ENCODE measurements at regions of chr19 and their contacts with region 1.

Region 1: GRCh38 chr19:37906869-37907734 is at the start of gene SIPA1L3:
- DNase-seq: peak; percentile 88 to 97
- H3K4me3 ChIP-seq: peak within 1 kb of the TSS; percentile 100
- H3K27ac ChIP-seq: peak within 1 kb of the TSS; percentile 67
- H3K4me1 ChIP-seq: peaks cover 18% of the 10 kb centered on the region
- H3K27me3 ChIP-seq: no peaks in the 10 kb centered on the region
- CTCF ChIP-seq: no peak
- total RNA-seq, gene SIPA1L3: 53.4 and 55.2 TPM in 2 replicates

Region 2: DNA sequence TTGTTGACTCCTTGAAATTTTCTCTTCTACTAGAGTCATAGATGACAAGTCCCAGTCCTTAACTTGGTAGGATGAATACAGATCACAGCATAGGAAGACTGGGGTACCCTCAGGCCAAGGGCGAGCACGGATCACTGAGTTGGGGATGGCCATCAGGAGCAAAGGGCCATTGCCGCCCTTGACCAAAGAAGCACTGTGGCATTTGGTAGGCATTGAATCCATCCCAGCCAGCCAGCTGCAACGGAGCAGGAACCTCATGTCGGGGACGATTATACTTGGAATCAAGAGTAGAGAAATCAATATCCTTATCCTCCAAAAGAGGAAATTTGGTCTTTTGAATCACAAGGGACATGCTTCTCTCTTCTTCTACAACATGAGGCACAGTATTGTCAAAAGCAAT is 77.6 kb before region 1 on chr19:
- CTCF ChIA-PET with region 1: no interaction called
- POLR2A ChIA-PET with region 1: no interaction called
- intact Hi-C with region 1: no loop called
- DNase-seq: no peak
- H3K4me3 ChIP-seq: no peak overlapping the region
- H3K27ac ChIP-seq: no peak overlapping the region
- H3K4me1 ChIP-seq: no peaks in the 10 kb centered on the region
- H3K27me3 ChIP-seq: peaks cover 57% of the 10 kb centered on the region
- CTCF ChIP-seq: no peak

Region 3: GRCh38 chr19:37988758-37989635 is 81.9 kb after region 1 on chr19:
- CTCF ChIA-PET with region 1: interaction called, 18 read pairs
- POLR2A ChIA-PET with region 1: interaction called, 8 read pairs
- intact Hi-C with region 1: loop called (anchors 1 kb)
- DNase-seq: no peak
- H3K4me3 ChIP-seq: no peak overlapping the region
- H3K27ac ChIP-seq: no peak overlapping the region
- H3K4me1 ChIP-seq: peaks cover 41% of the 10 kb centered on the region
- H3K27me3 ChIP-seq: no peaks in the 10 kb centered on the region
- CTCF ChIP-seq: no peak

Region 4: DNA sequence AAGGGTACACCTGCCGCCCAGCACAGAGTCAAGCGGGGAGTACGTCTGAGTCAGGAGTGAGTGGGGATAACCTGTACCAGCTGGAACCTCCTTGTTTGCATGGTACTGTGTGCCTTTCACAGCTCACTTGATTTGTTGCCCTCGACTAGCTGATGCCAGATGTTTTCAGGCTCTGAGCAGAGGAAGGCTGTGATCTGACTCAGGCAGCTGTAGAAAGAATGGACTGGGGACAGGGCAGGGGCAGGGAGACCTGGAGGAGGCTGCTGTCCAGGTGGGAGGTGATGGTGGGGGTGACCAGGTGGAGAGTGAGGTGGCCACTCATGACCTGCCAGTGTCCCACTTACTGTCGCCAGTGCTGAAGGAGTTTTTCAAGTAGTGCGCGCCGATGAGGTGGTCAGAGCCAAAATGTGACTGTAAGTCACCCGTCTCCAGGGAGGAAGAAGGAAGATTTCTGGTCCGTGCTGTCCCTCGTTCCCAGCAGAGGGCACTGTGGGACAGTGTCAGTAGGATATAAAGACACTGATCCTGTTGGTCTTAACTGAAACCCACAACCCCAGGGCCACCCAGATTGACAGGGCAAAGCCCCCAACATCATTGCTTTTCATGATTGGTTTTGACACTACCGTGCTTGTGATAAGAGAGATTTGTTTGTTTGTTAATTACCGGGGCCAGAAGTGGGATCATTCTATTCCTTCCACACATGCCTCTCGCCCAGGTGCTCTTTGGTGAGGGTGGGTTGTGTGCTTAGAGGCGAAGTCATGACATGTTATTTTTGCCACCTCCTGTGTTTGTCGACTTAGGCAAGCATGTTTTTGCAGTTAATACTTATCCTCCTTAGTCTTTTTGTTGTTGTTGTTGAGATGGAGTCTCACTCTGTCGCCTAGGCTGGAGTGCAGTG is 188.6 kb after region 1 on chr19:
- CTCF ChIA-PET with region 1: interaction called, 3 read pairs
- POLR2A ChIA-PET with region 1: no interaction called
- intact Hi-C with region 1: loop called (anchors 1 kb)
- DNase-seq: peak in 1 of 2 experiments; percentile 61
- H3K4me3 ChIP-seq: no peak overlapping the region
- H3K27ac ChIP-seq: no peak overlapping the region
- H3K4me1 ChIP-seq: no peaks in the 10 kb centered on the region
- H3K27me3 ChIP-seq: no peaks in the 10 kb centered on the region
- CTCF ChIP-seq: peak; percentile 74

Region 5: GRCh38 chr19:38213911-38214625 is 307.0 kb after region 1 on chr19:
- CTCF ChIA-PET with region 1: no interaction called
- POLR2A ChIA-PET with region 1: interaction called, 25 read pairs
- intact Hi-C with region 1: no loop called
- DNase-seq: peak; percentile 44 to 72
- H3K4me3 ChIP-seq: no peak overlapping the region
- H3K27ac ChIP-seq: no peak overlapping the region
- H3K4me1 ChIP-seq: no peaks in the 10 kb centered on the region
- H3K27me3 ChIP-seq: no peaks in the 10 kb centered on the region
- CTCF ChIP-seq: no peak

Region 6: DNA sequence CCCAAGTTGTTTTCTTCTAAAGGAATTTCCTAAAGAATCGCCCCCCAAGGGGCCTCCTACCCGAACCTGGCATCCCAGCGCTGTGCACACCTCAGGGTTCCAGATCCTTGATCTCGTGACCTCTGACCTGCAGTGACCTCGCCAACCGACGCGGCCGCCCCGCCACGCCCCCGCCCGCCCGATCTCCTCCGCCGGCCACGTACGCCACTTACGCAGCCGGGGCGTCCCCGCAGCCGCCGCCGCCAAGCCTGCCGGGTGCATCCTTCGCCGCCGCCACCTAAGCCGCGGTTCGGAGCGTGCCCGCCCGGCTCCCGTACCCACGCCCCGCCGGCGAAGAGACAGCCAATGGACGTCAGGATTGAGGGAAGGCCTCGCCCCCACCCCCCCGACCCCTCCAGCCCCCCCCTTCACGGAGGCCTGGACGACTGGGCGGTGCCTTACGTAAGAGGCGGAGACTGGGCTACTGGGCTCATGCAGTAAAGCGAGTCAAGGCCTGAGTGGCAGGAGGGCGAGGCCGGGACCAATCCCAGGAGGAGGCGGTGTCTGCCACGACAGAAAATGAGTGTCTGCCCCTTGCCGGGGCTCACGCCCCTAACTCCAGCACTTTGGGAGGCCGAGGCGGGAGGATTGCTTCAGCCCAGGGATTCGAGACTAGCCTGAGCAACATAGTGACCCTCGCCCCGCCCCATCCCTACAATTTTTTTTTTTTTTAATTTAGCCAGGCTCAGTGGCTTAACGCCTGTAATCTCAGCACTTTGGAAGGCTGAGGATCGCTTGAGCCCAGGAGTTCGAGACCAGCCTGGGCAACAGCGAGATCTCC is 408.8 kb after region 1 on chr19 and contains the start of gene YIF1B:
- CTCF ChIA-PET with region 1: no interaction called
- POLR2A ChIA-PET with region 1: no interaction called
- intact Hi-C with region 1: loop called (anchors 5 kb)
- DNase-seq: peak; percentile 94 to 96
- H3K4me3 ChIP-seq: peak within 1 kb of the TSS; percentile 60
- H3K27ac ChIP-seq: peak within 1 kb of the TSS; percentile 67
- H3K4me1 ChIP-seq: peaks cover 21% of the 10 kb centered on the region; the same call in 1 of the 2 replicates
- H3K27me3 ChIP-seq: peaks cover 16% of the 10 kb centered on the region
- CTCF ChIP-seq: no peak
- total RNA-seq, gene YIF1B: 33.6 and 39.8 TPM in 2 replicates

Region 7: DNA sequence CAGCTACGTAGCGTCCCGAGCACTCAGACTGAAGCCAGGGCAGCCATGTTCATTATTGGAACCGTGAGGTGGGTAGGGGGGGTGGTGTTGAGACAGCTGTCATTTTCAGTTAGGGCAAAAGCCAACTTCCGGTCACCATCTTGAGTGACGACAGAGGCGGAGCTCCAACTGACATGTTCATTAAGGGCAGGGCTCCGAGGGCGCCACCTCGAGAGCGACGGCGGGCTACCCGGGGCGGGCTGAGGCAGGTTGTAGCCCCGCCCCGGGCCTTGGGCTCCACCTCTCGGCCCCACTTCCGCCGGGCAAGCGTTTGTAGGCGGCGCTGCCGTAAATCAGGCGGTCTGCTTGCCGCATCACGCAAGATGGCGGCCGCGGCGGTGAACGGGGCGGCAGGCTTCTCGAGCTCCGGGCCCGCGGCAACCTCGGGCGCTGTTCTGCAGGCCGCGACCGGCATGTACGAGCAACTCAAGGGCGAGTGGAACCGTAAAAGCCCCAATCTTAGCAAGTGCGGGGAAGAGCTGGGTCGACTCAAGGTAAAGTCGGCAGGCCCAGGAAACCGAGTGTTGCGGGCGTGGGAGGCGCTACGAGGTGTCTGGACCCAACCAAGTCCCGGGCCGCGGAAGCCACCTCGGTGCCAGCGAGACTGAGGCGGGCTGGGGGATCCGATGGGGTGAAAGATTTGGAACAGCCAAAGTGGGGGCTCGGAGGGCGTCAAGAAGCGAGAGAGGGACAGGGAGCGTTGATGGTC is 467.5 kb after region 1 on chr19 and contains the start of gene PSMD8:
- CTCF ChIA-PET with region 1: no interaction called
- POLR2A ChIA-PET with region 1: interaction called, 20 read pairs
- intact Hi-C with region 1: no loop called
- DNase-seq: peak; percentile 92 to 97
- H3K4me3 ChIP-seq: peak within 1 kb of the TSS; percentile 76
- H3K27ac ChIP-seq: peak within 1 kb of the TSS; percentile 58
- H3K4me1 ChIP-seq: peaks cover 15% of the 10 kb centered on the region
- H3K27me3 ChIP-seq: no peaks in the 10 kb centered on the region
- CTCF ChIP-seq: peak; percentile 35; the same call in 1 of the 2 replicates
- total RNA-seq, gene PSMD8: 141 and 222 TPM in 2 replicates

Region 8: DNA sequence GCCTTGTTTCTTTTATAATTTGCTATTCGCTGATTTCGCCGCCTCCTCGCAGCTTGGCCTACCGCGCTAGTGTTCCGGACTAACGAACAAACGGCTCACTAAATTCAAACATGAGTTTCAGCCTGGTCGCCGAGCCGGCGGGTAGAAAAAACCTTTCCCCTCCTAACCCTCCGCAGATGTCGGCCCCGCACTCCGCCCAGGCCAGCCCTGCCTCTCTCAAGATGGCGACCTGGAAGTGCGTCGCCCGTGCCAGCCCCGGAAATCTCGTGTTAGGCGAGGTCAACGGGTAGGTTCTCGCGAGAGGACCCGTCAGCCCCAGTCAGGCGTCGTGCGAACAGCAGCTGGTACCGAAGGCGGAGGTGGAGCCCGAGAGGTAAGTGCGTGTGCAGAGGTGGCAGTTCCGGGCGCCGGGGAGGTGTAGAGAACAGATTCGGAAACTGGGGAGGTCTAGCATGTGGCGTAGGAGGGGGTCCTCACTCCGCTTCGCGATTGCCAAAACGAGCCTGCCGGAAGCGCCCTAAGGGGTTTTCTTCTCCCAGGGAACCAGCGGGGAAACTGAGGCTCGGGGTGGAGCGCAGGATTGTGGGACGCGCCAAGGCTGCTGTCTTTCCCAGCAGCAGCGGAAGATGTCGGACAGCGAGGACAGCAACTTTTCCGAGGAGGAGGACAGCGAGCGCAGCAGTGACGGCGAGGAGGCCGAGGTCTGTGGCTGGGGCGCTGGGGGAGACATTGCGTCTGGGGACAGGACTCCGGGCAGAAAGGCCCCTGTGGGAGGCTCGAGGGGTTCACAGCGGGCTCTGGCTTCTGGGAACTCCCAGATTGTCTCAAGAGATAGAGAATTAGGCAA is 1538.4 kb after region 1 on chr19 and contains the start of gene SUPT5H:
- CTCF ChIA-PET with region 1: no interaction called
- POLR2A ChIA-PET with region 1: interaction called, 18 read pairs
- intact Hi-C with region 1: no loop called
- DNase-seq: peak; percentile 94 to 95
- H3K4me3 ChIP-seq: peak within 1 kb of the TSS; percentile 83
- H3K27ac ChIP-seq: peak within 1 kb of the TSS; percentile 97
- H3K4me1 ChIP-seq: peaks cover 30% of the 10 kb centered on the region
- H3K27me3 ChIP-seq: no peaks in the 10 kb centered on the region
- CTCF ChIP-seq: no peak
- total RNA-seq, gene SUPT5H: 99.7 and 118 TPM in 2 replicates

Measured in PC-9 (cell line).